Heart right ventricle (tissue), 16 donors: ENCODE measurements at regions of chr12 and their contacts with region 1.

Region 1: DNA sequence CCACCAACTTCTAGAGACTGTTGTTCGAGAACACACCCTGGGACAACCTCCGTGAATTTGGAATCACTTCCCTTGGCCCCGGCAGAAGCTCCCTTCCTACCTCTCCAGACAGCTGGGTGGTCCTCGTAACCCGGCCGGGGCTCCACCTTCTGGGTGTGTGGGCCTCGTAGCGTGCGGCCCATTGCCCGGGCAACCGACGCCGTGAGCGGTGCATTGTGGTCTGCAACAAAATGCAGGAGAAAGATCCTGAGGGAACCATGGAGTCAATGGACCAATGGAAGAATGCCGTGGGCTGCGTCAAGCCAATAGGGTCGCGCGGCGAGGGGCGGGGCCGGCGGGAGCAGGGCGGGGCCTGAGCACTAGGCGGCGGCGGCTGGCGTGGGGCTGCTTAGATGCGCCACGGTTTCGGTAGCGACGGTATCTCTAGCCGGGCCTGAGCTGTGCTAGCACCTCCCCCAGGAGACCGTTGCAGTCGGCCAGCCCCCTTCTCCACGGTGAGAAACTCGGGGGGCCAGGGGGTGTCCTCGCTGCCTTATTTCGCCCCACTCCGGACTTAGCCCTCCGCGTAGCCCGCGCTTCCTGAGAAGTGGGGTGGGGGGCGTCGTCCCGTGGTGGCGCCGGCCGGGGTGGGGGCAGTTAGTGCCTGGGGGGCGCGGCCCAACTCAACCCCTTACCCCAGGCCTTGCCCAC is at the start of gene DYNLL1:
- DNase-seq: peak; percentile 96 to 97
- ATAC-seq: peak; percentile 98 to 99 (median 99)
- H3K4me3 ChIP-seq: peak within 1 kb of the TSS; percentile 72 to 99 (median 96)
- H3K27ac ChIP-seq: peak within 1 kb of the TSS; percentile 24 to 97 (median 93)
- H3K4me1 ChIP-seq: peaks cover 6 to 38% (median 28%) of the 10 kb centered on the region in 9 donors
- H3K27me3 ChIP-seq: no peaks in the 10 kb centered on the region
- CTCF ChIP-seq: no peak
- total RNA-seq, gene DYNLL1: 94.0 to 227 (median 120) TPM

Region 2: DNA sequence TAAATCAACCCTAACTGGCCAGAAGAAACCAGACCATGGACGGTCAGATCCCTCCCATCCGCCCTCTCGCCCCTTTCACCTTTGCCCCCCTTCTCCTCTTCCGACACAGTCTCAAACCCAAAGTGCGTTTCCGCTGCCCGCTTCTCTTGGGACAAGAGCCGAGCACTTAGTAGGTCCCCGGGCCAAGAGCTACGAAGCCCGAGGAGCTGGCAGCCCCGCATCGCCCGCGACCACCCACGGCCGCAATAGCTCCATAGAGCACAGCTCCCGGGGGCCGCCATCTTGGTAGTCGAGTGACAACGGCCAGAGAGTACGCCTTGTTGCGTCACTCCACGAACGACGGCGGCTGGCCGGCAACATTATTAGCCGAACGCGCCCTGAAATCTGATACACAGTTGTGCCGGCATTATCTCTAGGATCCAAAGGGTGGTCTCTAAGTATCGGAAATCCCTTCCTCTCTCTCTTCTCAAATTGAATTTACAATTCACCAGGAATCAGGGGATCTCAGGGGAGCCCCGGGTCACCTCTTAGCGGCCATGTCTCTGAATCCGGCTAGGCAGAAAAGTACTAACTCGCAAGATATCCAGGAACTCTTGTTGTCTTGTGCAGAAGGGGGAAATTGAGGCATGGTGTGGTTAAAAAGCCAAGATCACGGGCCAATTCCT is 33.1 kb after region 1 on chr12 and contains the start of gene COQ5:
- intact Hi-C with region 1: loop called in 1 of 10 experiments (anchors 2 kb)
- DNase-seq: peak; percentile 91 to 94
- ATAC-seq: peak; percentile 93 to 97 (median 96)
- H3K4me3 ChIP-seq: peak within 1 kb of the TSS; percentile 60 to 80 (median 72)
- H3K27ac ChIP-seq: peak within 1 kb of the TSS; percentile 64 to 96 (median 93)
- H3K4me1 ChIP-seq: peaks cover 0 to 21% (median 16%) of the 10 kb centered on the region in 9 donors
- H3K27me3 ChIP-seq: no peaks in the 10 kb centered on the region
- CTCF ChIP-seq: no peak
- total RNA-seq, gene COQ5: 32.0 to 56.0 (median 43.6) TPM

Region 3: DNA sequence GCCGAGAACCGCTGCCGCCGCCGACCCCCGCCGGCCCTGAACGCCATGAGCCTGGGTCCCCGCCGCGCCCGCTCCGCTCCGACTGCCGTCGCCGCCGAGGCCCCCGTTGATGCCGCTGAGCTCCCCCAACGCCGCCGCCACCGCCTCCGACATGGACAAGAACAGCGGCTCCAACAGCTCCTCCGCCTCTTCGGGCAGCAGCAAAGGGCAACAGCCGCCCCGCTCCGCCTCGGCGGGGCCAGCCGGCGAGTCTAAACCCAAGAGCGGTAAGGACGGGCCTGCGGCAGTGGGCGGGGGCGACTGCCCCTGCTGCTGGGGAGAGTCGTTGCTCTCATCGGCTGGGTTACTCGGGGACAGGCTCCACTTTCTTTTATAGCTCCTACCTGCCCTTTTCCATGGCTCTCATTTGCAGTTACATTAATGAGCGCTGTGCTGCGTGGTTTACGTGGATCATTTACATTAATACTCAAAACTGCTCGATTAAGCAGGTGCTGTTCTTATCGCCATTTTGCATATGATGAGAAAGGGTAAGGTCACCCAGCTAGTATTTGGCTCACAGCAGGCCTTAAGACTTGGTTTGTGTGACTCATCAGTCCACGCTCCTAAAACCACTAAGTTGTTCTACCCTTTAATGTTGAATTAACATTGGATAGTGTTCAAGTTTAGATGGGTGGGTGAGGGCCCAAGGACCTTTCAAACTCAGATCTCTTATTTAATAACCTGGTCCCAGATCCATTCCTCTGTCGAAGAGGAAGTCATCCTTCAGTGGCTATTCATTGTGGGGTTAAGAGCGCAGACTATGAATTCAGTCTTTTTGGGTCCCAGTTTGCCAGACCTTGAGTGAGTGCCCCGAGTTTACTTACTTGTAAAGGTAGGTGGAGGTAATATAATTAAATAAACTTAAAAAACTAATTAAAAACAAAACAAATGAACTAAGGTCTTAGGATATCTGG is 39.1 kb after region 1 on chr12:
- intact Hi-C with region 1: loop called in 1 of 10 experiments (anchors 5 kb)
- DNase-seq: peak; percentile 26 to 37
- ATAC-seq: peak; percentile 13 to 55 (median 31)
- H3K4me3 ChIP-seq: peak overlapping the region; percentile 50 to 98 (median 92)
- H3K27ac ChIP-seq: peak overlapping the region; percentile 71 to 99 (median 95)
- H3K4me1 ChIP-seq: peaks cover 17 to 56% (median 47%) of the 10 kb centered on the region in 9 donors
- H3K27me3 ChIP-seq: no peaks in the 10 kb centered on the region
- CTCF ChIP-seq: no peak

Region 4: DNA sequence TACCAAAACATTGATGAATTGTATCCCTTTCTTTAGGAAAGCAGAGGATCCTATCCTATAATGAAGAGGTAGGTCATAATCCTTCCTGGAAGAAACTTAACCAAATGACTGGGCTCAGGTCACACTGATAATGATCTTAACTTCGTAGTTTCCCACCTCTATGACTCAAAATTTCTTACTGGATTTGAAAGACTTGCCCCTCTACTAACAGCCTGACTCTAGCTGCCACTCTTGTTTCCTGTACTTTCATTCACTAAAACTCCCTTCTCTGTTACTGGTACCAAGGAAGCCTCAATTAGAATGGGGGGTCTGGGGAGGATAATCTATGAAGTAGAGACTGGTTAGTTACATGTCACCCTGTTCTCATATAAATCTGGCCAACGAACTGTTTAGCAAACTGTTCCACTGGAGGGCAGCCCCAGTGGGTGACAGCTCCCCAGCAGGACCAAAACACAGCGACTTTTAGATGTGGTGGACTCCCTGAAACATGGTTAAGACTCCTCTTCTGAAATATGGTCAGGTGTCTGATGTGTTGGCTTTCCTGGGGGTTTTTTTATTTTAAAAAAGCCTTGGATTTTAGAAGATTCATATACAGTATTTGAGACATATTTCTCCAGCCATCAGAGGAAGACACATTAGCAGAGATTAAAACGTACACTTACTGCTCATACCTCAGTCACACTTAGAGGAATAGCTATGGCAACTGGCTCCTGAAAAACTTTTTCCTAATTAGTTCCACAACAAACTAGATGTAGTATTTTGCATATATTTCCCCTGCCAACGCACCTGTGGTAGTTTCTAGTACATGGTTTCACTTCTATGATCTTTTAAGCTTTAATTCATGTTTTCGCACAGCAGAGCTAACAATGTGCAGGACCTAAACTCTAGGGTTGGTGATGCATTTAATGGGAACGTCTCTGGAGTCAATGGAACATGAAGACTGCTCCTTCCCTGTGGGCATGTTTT is 302.1 kb after region 1 on chr12:
- intact Hi-C with region 1: no loop called
- DNase-seq: no peak
- ATAC-seq: no peak
- H3K4me3 ChIP-seq: no peak overlapping the region
- H3K27ac ChIP-seq: no peak overlapping the region
- H3K4me1 ChIP-seq: peaks cover 0 to 38% (median 0%) of the 10 kb centered on the region in 9 donors
- H3K27me3 ChIP-seq: no peaks in the 10 kb centered on the region
- CTCF ChIP-seq: no peak